ENCODE measurements at regions of chr9 and their contacts with region 1.

Region 1: GRCh38 chr9:5800969-5801738 is 31.8 kb downstream of the ERMP1 start:
- DNase-seq: no peak
- ATAC-seq: no peak
- H3K4me3 ChIP-seq: no peak overlapping the region
- H3K27ac ChIP-seq: no peak overlapping the region
- H3K4me1 ChIP-seq: no peaks in the 10 kb centered on the region
- H3K27me3 ChIP-seq: no peaks in the 10 kb centered on the region
- CTCF ChIP-seq: no peak

Region 2: DNA sequence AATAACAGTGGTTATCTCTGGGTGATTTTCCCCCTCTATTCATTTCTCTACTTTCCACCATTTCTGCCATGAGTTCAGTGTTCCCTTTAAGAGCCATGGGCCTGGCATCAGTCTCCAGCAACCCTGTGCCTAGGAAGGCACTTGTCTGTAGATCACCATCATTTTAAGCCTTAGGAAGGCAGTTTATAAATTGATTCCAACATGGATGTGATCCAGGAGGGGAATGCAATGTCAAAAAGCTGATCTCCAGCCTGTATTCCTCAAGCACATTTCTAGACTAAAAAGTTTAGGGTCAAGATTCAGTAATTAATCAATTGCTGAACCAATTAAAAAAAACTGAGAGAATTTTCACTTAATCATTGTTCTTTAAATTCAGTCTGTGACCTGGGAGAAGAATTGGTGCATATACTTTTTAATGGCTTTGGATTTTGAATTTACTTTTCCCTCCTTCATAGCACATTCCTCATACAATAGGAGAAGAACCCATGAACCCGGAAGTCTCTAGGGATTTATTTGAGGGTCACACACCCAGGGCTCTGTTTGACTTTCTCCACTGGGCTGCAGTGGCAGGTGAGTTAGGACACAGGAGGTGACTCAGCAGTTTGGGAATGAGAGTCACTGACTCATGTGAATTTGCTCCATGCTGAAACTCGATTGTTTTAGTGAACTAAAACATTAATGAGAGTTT is 37.9 kb after region 1 on chr9:
- intact Hi-C with region 1: loop called in 1 of 2 experiments (anchors 5 kb)
- DNase-seq: no peak
- ATAC-seq: peak; percentile 81 to 94 (median 92)
- H3K4me3 ChIP-seq: peak overlapping the region; percentile 42
- H3K27ac ChIP-seq: peak overlapping the region; percentile 66
- H3K4me1 ChIP-seq: peaks cover 9% of the 10 kb centered on the region
- H3K27me3 ChIP-seq: no peaks in the 10 kb centered on the region
- CTCF ChIP-seq: no peak

Measured in psoas muscle (tissue), 8 donors.